ENCODE measurements at regions of chr13 and their contacts with region 1.

Region 1: DNA sequence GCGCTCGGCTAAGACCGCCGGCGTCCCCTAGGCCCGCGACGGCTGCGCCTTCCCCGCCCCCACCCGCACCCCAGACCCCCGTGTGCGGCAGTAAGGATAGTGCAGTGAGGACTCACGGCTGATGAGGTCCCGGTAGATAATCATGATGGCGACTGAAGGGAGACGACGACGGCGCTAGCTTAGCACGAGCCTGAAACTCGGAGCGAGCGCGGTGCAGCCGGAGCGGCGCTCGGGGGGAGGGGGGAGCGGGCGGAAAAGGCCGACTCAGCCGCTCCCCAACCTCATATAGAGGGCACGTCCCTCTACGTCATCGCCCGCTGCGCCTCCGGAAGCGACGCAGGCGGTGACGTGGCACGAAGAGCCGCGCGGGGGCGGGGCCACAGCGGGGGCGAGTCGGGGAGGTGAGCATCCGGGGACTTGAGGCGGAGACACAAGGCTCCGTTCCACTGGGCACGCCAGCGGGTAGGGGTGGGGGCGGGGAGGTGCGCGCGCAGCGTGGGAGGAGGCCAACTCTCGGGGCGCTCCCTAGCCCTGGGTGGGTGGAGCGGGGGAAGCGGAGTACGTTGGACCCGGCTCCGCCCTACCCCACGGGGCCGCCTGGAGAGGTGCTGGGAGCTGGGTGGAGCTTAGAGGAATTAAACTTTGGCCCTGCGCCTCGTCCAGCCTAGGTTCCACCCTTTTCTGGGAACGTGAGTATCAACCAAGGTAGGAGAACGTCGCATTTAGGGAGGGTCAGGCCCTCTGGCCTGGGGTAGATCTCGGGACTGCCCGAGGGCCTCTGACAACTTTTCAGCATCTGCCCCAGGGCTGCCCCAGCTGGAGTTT is at the start of gene TPT1:
- DNase-seq: peak; percentile 87
- H3K4me3 ChIP-seq: peak within 1 kb of the TSS; percentile 85
- CTCF ChIP-seq: no peak

Region 2: GRCh38 chr13:45178349-45179162 is 162.6 kb before region 1 on chr13:
- CTCF ChIA-PET with region 1: no interaction called
- POLR2A ChIA-PET with region 1: no interaction called
- DNase-seq: peak; percentile 21
- H3K4me3 ChIP-seq: no peak overlapping the region
- CTCF ChIP-seq: no peak

Region 3: DNA sequence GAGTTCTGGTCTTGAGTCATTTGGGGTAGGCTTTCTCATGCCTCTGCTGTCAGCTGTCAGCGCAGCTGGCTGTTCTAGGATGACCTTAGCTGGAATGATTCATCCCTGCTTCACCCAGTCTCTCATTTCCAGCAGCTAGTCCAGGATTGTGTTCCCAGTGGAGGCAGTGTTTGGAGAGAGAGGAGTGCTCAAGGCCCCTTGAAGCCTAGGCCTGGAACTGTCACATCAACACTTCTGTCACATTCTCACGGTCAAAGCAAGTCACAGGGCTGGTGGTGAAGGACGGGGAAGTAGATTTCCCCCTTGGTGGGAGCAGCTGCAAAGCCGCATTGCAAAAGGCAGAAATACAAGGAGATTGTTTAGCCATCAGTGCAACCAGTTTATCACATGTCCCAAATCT is 15.3 kb before region 1 on chr13:
- CTCF ChIA-PET with region 1: interaction called, 10 read pairs
- POLR2A ChIA-PET with region 1: interaction called, 13 read pairs
- DNase-seq: no peak
- H3K4me3 ChIP-seq: no peak overlapping the region
- CTCF ChIP-seq: no peak

Measured in AG04449 (cell line).